Stomach (tissue), 19 donors: ENCODE measurements at regions of chr11 and their contacts with region 1.

Region 1: DNA sequence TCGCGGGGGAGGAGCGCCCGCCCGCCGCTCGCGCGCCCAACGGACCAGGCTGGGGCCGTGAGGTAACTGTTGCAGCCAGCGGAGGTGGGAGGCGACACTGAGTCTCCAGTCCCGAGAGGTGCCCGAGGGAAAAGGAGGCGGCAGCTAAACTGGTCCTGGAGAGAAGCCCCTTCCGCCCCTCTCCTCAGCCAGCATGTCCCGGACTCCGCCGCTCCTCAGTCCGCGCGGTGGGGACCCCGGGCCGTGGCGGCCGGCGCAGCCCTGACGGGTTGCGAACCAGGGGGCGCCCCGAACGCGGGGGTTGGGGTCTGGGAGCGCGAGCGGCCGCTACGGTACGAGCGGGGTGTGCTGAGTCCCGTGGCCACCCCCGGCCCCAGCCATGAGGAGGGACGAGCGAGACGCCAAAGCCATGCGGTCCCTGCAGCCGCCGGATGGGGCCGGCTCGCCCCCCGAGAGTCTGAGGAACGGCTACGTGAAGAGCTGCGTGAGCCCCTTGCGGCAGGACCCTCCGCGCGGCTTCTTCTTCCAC is at the start of gene PDE3B:
- DNase-seq: peak; percentile 84 to 93
- H3K4me3 ChIP-seq: peak within 1 kb of the TSS; percentile 79 to 90 (median 90)
- H3K27ac ChIP-seq: peak within 1 kb of the TSS; percentile 84 to 90 (median 87)
- H3K4me1 ChIP-seq: peaks cover 0 to 48% (median 34%) of the 10 kb centered on the region in 4 donors
- H3K27me3 ChIP-seq: peaks cover 0 to 15% (median 3%) of the 10 kb centered on the region in 3 donors
- CTCF ChIP-seq: no peak
- EP300 ChIP-seq: no peak
- POLR2A ChIP-seq: no peak
- total RNA-seq, gene PDE3B: 13.8 to 49.2 (median 19.3) TPM

Region 2: DNA sequence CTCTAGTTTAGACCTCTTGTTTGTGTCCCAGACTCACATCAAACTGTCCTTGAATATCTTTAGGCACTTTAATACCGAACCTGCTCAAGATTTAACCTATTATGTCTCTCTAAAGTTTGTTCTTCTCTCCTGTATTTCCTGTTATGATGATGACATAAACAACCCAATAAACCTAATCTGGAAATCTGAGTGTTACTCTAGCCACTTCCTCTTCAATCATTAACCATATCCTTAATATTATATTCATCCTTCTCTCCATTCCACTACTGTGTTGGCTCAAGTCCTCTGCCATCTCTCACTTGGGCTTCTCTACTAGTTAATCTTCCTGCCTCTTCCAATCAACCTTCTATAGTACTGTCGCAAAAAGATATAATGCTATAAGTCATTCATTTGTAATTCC is 180.1 kb before region 1 on chr11:
- intact Hi-C with region 1: no loop called
- DNase-seq: no peak
- H3K4me3 ChIP-seq: no peak overlapping the region
- H3K27ac ChIP-seq: no peak overlapping the region
- H3K4me1 ChIP-seq: peaks cover 0 to 9% (median 0%) of the 10 kb centered on the region in 4 donors
- H3K27me3 ChIP-seq: no peaks in the 10 kb centered on the region
- CTCF ChIP-seq: no peak
- EP300 ChIP-seq: no peak
- POLR2A ChIP-seq: no peak

Region 3: GRCh38 chr11:14537134-14537599 is 106.6 kb before region 1 on chr11:
- intact Hi-C with region 1: loop called (anchors 10 kb)
- DNase-seq: peak in 1 of 2 donors; percentile 62
- H3K4me3 ChIP-seq: no peak overlapping the region
- H3K27ac ChIP-seq: no peak overlapping the region
- H3K4me1 ChIP-seq: peaks cover 0 to 39% (median 15%) of the 10 kb centered on the region in 4 donors
- H3K27me3 ChIP-seq: no peaks in the 10 kb centered on the region
- CTCF ChIP-seq: peak in 5 of 7 experiments; percentile 62 to 84 (median 78)
- EP300 ChIP-seq: no peak
- POLR2A ChIP-seq: no peak

Region 4: DNA sequence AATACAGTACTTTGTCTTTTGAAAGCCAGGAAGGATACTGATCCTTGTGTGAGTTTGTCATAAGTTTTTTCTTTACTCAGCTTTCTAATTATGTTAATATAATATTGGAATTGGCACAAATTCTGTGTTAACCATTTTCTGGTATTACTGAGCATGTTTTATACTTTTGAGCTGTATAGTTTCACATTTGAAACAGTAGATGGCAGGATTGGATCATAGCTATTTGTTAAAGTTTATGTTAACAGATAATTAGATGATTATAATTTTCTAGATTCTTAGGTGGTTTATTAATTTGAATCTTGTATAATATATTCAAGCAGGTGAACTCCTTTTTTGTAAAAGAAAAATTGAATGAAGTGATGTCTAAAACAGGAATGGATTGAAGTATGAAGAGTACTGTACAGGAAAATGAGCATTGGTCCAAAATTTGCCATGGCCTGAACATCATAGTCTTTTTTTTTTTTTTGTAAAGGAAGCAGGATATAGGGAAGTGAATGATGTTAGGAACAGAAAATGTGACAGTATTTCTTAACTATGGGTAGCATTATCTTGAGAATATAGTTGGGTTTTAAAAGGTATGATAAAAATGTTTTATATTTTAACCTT is 146.2 kb after region 1 on chr11:
- intact Hi-C with region 1: no loop called
- DNase-seq: peak in 1 of 2 donors; percentile 30
- H3K4me3 ChIP-seq: no peak overlapping the region
- H3K27ac ChIP-seq: no peak overlapping the region
- H3K4me1 ChIP-seq: no peaks in the 10 kb centered on the region
- H3K27me3 ChIP-seq: no peaks in the 10 kb centered on the region
- CTCF ChIP-seq: peak in 5 of 7 experiments; percentile 5 to 44 (median 41)
- EP300 ChIP-seq: no peak
- POLR2A ChIP-seq: no peak